ENCODE measurements at regions of chr20 and their contacts with region 1.

Region 1: GRCh38 chr20:12575352-12576095 is 433.2 kb upstream of the SPTLC3 start:
- DNase-seq: no peak
- CTCF ChIP-seq: no peak

Region 2: GRCh38 chr20:12399110-12399836 is 176.3 kb before region 1 on chr20:
- CTCF ChIA-PET with region 1: no interaction called
- POLR2A ChIA-PET with region 1: no interaction called
- DNase-seq: no peak
- CTCF ChIP-seq: no peak

Region 3: GRCh38 chr20:12504779-12505178 is 70.7 kb before region 1 on chr20:
- CTCF ChIA-PET with region 1: no interaction called
- POLR2A ChIA-PET with region 1: no interaction called
- DNase-seq: no peak
- CTCF ChIP-seq: no peak

Region 4: GRCh38 chr20:12564979-12565378 is 10.5 kb before region 1 on chr20:
- CTCF ChIA-PET with region 1: interaction called, 10 read pairs
- POLR2A ChIA-PET with region 1: no interaction called
- DNase-seq: no peak
- CTCF ChIP-seq: no peak

Region 5: DNA sequence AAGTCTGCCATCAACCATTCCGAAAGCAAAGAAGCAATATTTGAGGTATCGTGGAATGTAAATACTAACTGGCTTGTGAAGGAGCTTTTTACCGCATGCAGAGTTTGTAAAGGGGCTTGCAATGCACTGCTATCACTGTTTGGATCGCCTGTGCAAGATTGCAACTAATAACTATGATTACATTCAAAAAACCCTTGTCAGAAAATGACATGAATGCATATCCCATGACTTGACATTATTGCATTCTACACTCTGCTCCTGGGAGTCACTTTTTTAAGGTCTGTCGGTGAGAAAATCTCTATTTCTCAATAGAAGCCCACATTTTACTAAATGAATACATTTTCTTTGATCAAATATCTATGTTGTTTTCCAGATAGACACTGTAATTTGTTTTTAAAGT is 97.8 kb after region 1 on chr20:
- CTCF ChIA-PET with region 1: no interaction called
- POLR2A ChIA-PET with region 1: no interaction called
- DNase-seq: no peak
- CTCF ChIP-seq: no peak

Region 6: GRCh38 chr20:12798286-12798685 is 222.8 kb after region 1 on chr20:
- CTCF ChIA-PET with region 1: no interaction called
- POLR2A ChIA-PET with region 1: no interaction called
- DNase-seq: no peak
- CTCF ChIP-seq: no peak